ENCODE measurements at regions of chr9 and their contacts with region 1.

Region 1: DNA sequence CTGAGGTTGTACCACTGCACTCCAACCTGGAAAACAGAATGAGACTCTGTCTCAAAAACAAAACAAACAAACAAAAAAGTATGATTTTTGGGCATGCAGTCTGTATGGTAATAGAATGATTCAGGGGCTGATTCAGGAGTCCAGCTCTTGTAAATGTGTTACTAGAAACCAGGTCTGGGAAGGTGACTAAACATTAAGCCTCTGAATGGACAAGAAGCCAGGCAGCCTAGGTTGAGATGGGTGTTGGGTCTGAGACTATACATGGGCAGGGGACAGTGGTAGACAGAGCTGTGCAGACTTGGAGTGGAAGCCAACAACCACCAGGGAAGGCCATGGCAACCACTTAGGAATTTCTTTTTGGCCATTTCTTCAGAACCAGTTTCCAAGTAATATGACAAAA is 64.9 kb upstream of the TLE1 start:
- DNase-seq: no peak
- ATAC-seq: no peak
- H3K4me3 ChIP-seq: no peak overlapping the region
- H3K27ac ChIP-seq: no peak overlapping the region
- H3K4me1 ChIP-seq: no peaks in the 10 kb centered on the region
- H3K27me3 ChIP-seq: no peaks in the 10 kb centered on the region
- CTCF ChIP-seq: no peak
- POLR2A ChIP-seq: no peak

Region 2: GRCh38 chr9:81656004-81656403 is 98.2 kb before region 1 on chr9:
- intact Hi-C with region 1: no loop called
- DNase-seq: no peak
- ATAC-seq: peak in 3 of 4 donors; percentile 42 to 77 (median 54)
- H3K4me3 ChIP-seq: no peak overlapping the region
- H3K27ac ChIP-seq: no peak overlapping the region
- H3K4me1 ChIP-seq: peaks cover 0 to 16% (median 6%) of the 10 kb centered on the region in 12 donors
- H3K27me3 ChIP-seq: no peaks in the 10 kb centered on the region
- CTCF ChIP-seq: no peak
- POLR2A ChIP-seq: no peak

Region 3: GRCh38 chr9:81737853-81738507 is 16.3 kb before region 1 on chr9:
- intact Hi-C with region 1: loop called in 1 of 10 experiments (anchors 2 kb)
- DNase-seq: no peak
- ATAC-seq: peak in 3 of 4 donors; percentile 28 to 69 (median 61)
- H3K4me3 ChIP-seq: no peak overlapping the region
- H3K27ac ChIP-seq: no peak overlapping the region
- H3K4me1 ChIP-seq: peaks cover 0 to 16% (median 0%) of the 10 kb centered on the region in 12 donors
- H3K27me3 ChIP-seq: no peaks in the 10 kb centered on the region
- CTCF ChIP-seq: no peak
- POLR2A ChIP-seq: no peak

Measured in heart left ventricle (tissue), 16 donors.